Natural killer cell (primary cell): ENCODE measurements at regions of chr15 and their contacts with region 1.

Region 1: DNA sequence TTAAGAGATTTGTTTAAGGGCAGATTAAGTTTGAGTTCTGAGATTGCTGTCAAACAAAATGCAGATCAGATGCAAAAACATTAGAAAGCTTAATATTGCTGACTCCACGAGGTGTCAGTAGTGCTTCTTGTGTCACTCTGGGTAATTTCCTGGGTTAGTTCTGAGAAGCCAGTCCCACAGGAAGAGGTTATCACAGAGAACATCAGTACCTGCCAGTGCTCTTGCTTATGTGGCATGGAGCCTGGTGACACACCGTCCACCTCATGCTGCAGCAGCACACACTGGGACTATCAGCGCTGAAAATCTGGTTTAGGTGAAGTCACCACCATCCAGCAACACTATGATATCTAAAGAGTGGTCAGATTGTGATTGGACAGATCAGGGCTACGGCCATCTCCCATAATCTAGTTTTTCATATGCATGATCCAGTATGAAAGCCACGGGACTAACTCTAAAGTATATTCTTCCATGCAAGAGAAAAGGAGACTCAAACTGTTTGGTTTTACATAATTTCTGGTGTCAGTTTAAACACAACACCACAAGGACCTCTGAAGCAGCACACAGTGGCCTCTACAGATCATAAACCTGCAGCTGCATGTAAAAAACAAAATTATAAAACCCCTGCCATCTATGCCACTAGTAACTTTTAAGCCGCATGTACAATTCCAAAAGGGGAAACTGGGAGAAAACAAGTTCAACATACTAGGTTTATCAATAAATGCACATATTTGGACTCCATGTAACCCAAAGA is 36.1 kb upstream of the MYO5C start:
- DNase-seq: peak in 1 of 2 donors; percentile 83
- ATAC-seq: peak; percentile 73 to 98 (median 92)
- H3K4me3 ChIP-seq: no peak overlapping the region
- H3K4me3 Mint-ChIP-seq: peak overlapping the region; percentile 40
- H3K27ac ChIP-seq: peak overlapping the region; percentile 24
- H3K27ac Mint-ChIP-seq: peak overlapping the region; percentile 68 to 74
- H3K4me1 ChIP-seq: peaks cover 6% of the 10 kb centered on the region
- H3K4me1 Mint-ChIP-seq: peaks cover 10 to 13% of the 10 kb centered on the region in 2 donors
- H3K27me3 ChIP-seq: no peaks in the 10 kb centered on the region
- H3K27me3 Mint-ChIP-seq: no peaks in the 10 kb centered on the region
- CTCF ChIP-seq: peak; percentile 49

Region 2: DNA sequence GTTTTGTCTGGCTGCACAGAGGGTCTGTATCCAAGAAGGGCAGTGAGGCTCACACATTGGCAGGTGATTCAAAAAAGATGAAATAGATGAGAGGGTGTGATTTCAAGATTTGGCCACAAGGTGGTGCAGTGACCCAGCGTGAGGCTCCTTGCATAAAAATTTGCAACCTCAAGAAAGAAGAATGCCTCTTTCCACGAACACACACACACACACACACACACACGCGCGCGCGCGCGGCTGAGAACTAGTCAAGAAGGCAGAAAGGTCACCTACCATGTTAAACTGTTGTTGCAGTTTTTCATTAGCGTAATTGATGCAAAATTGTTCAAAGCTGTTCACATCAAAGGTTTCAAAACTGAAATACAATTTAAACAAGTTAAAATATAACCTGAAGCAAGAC is 75.3 kb before region 1 on chr15:
- intact Hi-C with region 1: loop called (anchors 5 kb)
- DNase-seq: peak; percentile 45 to 90
- ATAC-seq: peak; percentile 86 to 95 (median 93)
- H3K4me3 ChIP-seq: no peak overlapping the region
- H3K4me3 Mint-ChIP-seq: peak overlapping the region; percentile 47
- H3K27ac ChIP-seq: no peak overlapping the region
- H3K27ac Mint-ChIP-seq: peak overlapping the region in 1 of 2 donors; percentile 27
- H3K4me1 ChIP-seq: peaks cover 10% of the 10 kb centered on the region
- H3K4me1 Mint-ChIP-seq: peaks cover 8 to 12% of the 10 kb centered on the region in 2 donors
- H3K27me3 ChIP-seq: no peaks in the 10 kb centered on the region
- H3K27me3 Mint-ChIP-seq: peaks cover 0 to 2% of the 10 kb centered on the region in 2 donors
- CTCF ChIP-seq: peak; percentile 71